Mammary epithelial cell (primary cell): ENCODE measurements at regions of chr20 and their contacts with region 1.

Region 1: GRCh38 chr20:46752728-46753127 is 43.3 kb downstream of the SLC2A10 start:
- DNase-seq: peak; percentile 16
- H3K4me3 ChIP-seq: no peak overlapping the region
- H3K27ac ChIP-seq: no peak overlapping the region
- H3K4me1 ChIP-seq: peaks cover under 1% of the 10 kb centered on the region
- H3K27me3 ChIP-seq: no peaks in the 10 kb centered on the region
- CTCF ChIP-seq: peak; percentile 69 to 78

Region 2: GRCh38 chr20:46970923-46971616 is 218.3 kb after region 1 on chr20:
- CTCF ChIA-PET with region 1: no interaction called
- dilution Hi-C with region 1: no loop called
- in situ Hi-C with region 1: no loop called
- intact Hi-C with region 1: loop called (anchors 5 kb)
- DNase-seq: peak; percentile 88
- H3K4me3 ChIP-seq: no peak overlapping the region
- H3K27ac ChIP-seq: no peak overlapping the region
- H3K4me1 ChIP-seq: peaks cover 12% of the 10 kb centered on the region
- H3K27me3 ChIP-seq: no peaks in the 10 kb centered on the region
- CTCF ChIP-seq: no peak

Region 3: DNA sequence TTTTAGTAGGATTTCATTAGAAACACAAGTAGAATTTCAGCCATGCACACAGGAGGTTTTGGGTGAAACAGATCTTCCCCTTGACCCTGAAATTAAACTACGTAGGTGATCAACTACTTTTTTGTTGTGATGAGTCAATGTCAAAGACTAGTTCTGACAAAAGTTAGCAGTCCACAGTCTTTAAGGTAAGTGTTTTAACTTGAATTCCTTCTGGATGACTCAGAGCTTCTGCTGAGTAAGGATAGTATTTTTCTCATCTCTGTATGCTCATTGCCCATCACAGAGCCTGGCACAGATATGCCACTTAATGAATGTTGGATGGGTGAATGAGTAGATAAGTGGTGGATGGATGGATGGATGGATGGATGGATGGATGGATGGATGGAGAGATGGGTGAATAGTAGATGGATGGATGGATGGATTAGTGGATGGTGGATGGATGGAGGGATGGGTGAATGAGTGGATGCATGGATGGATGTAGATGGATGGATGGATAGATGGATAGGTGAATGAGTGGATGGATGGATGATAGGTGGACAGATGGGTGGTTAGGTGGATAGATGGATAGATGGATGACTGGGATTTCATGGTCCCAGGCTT is 438.4 kb after region 1 on chr20:
- CTCF ChIA-PET with region 1: no interaction called
- dilution Hi-C with region 1: no loop called
- in situ Hi-C with region 1: no loop called
- intact Hi-C with region 1: loop called (anchors 2 kb)
- DNase-seq: peak; percentile 91
- H3K4me3 ChIP-seq: no peak overlapping the region
- H3K27ac ChIP-seq: peak overlapping the region; percentile 26
- H3K4me1 ChIP-seq: peaks cover 14% of the 10 kb centered on the region
- H3K27me3 ChIP-seq: no peaks in the 10 kb centered on the region
- CTCF ChIP-seq: no peak